Heart right ventricle (tissue), 16 donors: ENCODE measurements at regions of chr1 and their contacts with region 1.

Region 1: DNA sequence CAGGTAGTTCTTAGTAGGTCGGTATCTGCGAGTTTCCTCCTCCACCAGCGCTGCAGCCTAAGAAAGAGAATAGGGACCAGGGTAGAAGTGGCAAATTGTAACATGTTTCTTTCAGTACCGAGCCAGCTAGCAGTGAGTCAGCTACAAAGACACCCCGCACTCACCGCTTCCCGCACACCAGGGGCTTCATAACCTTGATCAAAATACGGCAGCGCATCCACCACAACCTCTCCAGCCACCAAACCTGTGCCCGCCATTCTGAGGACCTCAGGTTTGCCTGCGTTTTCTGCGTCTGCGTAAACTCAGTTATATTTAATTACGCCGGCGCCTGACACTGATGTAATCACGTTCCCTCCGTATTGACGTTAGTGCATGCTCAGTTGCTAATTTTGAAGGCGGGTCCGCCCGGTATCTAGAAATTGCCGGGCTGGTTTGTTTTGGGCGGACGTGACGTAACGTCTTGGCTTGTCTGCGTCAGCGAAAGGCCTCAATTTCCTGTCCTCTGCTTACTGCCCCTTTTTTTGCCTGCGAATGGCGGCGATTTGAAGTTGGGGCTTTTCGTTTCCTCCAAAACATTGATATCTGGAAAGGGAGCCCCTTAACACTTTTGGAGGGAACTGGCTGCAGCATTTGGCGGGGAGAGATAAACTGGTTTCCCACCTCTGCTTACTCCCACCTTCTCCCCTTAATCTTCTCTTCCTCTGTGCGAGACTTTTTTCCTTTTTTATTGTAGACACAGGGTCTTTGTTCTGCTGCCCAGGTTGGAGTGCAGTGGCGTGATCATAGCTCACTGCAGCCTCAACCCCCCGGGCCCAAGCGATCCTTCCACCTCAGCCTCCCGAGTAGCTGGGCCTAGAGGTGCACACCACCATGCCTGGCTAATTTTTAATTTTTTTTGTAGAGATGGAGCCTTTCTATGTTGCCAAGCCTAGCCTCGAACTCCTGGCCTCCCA is at the start of gene BCAS2:
- DNase-seq: peak; percentile 91 to 98
- ATAC-seq: peak; percentile 97 to 100 (median 99)
- H3K4me3 ChIP-seq: peak within 1 kb of the TSS; percentile 59 to 86 (median 64)
- H3K27ac ChIP-seq: peak within 1 kb of the TSS; percentile 75 to 91 (median 88)
- H3K4me1 ChIP-seq: peaks cover 8 to 44% (median 29%) of the 10 kb centered on the region in 9 donors
- H3K27me3 ChIP-seq: no peaks in the 10 kb centered on the region
- CTCF ChIP-seq: no peak
- total RNA-seq, gene BCAS2: 26.9 to 52.6 (median 36.4) TPM

Region 2: DNA sequence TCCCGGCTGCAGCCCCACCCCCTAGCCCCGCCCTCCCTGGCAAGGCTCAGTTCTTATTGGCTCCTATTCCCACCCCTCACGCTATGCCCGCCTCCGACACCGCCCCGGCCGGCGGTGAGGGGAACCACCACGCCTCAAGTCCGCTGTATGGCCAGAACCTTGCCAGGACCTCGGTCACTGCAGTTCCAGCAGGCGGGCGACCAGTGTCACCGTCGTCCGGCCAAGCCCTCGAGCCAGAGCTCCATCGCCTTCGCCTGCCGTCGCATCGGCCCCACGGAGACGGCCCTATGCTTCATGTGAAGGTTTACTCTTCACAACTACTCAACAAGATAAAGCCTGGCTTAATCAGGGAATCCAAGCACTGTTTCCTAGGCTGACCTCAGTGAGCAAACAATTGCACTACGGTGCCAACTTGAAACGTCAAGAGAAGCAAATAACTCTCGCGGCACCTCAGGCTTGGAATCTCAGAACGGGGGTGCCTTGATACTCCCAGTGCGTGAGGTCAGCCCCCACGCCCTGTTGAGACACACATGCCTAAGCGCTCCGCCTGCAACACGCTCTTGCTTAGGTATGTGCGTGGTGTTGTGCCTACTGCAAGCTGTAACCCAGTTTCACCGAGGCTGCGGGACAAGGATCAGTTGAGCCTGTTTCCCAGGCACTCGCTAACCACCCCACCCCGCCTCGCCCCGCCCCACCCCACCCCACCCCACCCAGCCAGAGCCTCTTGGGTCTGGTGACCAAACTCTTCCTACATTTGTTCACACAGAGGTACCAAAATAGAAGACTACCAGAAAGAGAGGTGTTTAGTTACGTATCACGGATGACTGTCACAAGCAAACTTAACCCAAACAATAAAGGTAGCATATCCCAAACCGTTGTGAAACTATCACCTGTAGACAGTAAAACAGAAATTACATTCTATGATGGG is 88.7 kb after region 1 on chr1:
- intact Hi-C with region 1: loop called in 3 of 10 experiments (anchors 2 to 10 kb)
- DNase-seq: peak; percentile 96
- ATAC-seq: peak; percentile 99 to 100 (median 100)
- H3K4me3 ChIP-seq: peak overlapping the region; percentile 57 to 93 (median 83)
- H3K27ac ChIP-seq: peak overlapping the region in 9 of 10 donors; percentile 44 to 85 (median 79)
- H3K4me1 ChIP-seq: peaks cover 0 to 19% (median 9%) of the 10 kb centered on the region in 9 donors
- H3K27me3 ChIP-seq: peaks cover 0 to 4% (median 0%) of the 10 kb centered on the region in 7 donors
- CTCF ChIP-seq: peak in 8 of 9 donors; percentile 7 to 38 (median 28)

Region 3: GRCh38 chr1:114757455-114758250 is 176.0 kb after region 1 on chr1 and contains the start of gene CSDE1:
- intact Hi-C with region 1: loop called in 2 of 10 experiments (anchors 2 to 5 kb)
- DNase-seq: peak; percentile 95 to 98
- ATAC-seq: peak; percentile 97 to 99 (median 98)
- H3K4me3 ChIP-seq: peak within 1 kb of the TSS; percentile 70 to 97 (median 92)
- H3K27ac ChIP-seq: peak within 1 kb of the TSS; percentile 92 to 100 (median 98)
- H3K4me1 ChIP-seq: peaks cover 3 to 52% (median 45%) of the 10 kb centered on the region in 9 donors
- H3K27me3 ChIP-seq: no peaks in the 10 kb centered on the region
- CTCF ChIP-seq: peak in 7 of 9 donors; percentile 37 to 64 (median 42)
- total RNA-seq, gene CSDE1: 720 to 1,012 (median 916) TPM